ENCODE measurements at regions of chr7 and their contacts with region 1.

Region 1: DNA sequence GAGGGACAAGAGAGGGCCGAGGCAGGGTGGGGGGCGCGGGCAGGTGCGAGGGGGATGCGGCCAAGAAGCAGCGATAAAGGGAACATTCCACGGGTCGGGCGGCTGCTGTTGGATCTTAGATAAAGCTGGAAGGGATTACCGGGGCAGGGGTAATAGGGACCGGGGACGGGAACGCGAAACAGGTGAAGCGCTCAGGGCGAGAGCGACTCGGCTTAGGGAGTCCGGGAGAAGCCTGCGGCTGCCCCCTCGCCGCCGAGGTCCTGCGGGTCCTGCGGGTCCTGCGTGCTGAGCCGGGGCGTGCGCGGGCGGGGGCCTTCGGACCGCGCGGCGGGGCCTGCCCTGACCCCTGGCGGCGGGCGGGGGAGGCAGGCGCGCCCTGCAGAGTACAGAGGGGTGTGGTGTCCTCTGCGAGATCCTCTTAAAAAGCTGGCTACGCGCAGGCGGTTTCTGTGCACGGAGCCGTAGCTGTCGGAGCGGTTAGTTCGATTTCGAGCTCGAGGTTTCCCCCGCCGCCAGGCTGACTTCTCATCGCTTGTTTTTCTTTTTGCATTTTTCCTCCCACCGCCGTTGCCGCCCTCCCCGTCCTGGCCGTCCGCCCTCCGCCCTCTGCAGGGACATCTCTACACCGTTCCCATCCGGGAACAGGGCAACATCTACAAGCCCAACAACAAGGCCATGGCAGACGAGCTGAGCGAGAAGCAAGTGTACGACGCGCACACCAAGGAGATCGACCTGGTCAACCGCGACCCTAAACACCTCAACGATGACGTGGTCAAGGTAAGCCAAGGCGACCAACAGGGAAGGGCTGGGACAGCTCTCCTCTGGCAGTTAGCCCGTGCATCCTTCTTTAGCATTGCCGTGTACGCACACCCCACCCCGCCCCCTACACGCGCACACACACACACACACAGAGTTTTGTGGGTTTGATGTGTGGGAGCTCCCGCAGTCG is 1.4 kb downstream of the CAV1 start:
- DNase-seq: peak; percentile 74
- ATAC-seq: peak; percentile 91
- H3K4me3 Mint-ChIP-seq: peak overlapping the region; percentile 90
- H3K27ac Mint-ChIP-seq: peak overlapping the region; percentile 71
- H3K4me1 Mint-ChIP-seq: peaks cover 19% of the 10 kb centered on the region
- H3K27me3 Mint-ChIP-seq: peaks cover 38% of the 10 kb centered on the region
- CTCF ChIP-seq: peak; percentile 68

Region 2: DNA sequence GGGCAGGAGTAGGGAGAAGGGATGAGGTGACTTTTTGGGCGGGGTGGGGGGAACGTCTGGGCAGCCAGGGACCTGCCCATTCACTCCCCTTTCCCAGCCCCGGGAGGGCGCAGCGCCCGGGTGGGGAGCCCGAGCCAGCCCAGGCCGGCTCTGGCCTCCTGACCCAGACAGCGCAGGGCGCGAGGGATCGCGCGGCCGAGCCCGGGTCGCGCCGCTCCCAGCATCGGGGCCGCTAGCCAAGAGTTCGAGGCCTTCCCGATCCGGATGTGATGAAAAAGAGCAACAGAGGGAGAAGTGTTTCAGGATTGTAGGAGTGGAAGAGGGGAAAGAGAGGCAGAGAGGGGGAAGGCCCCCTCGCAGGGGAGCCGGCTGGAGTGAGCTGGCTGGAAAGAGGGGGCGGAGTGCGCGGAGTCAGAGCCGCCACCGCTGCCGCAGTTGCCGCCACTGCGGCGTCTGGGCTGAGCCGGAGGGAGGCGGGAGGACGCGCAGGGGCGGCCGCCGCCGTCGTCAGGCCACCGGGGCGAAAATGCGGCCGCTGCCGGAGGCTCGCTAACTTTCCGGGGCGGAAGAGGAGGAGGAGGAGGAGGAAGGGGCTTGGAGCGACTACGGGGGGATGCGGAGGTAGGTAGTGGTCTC is 1604.1 kb before region 1 on chr7 and contains the start of gene MDFIC:
- CTCF ChIA-PET with region 1: no interaction called
- POLR2A ChIA-PET with region 1: no interaction called
- intact Hi-C with region 1: loop called (anchors 10 kb)
- DNase-seq: peak; percentile 66
- ATAC-seq: peak; percentile 63
- H3K4me3 Mint-ChIP-seq: peak within 1 kb of the TSS; percentile 95
- H3K27ac Mint-ChIP-seq: peak within 1 kb of the TSS; percentile 97
- H3K4me1 Mint-ChIP-seq: peaks cover 70% of the 10 kb centered on the region
- H3K27me3 Mint-ChIP-seq: no peaks in the 10 kb centered on the region
- CTCF ChIP-seq: no peak
- total RNA-seq, gene MDFIC: 139 and 160 TPM in 2 replicates

Region 3: GRCh38 chr7:116173051-116174028 is 352.8 kb before region 1 on chr7:
- CTCF ChIA-PET with region 1: interaction called, 3 read pairs
- POLR2A ChIA-PET with region 1: no interaction called
- intact Hi-C with region 1: loop called (anchors 2 kb)
- DNase-seq: no peak
- ATAC-seq: peak; percentile 49
- H3K4me3 Mint-ChIP-seq: no peak overlapping the region
- H3K27ac Mint-ChIP-seq: no peak overlapping the region
- H3K4me1 Mint-ChIP-seq: peaks cover 12% of the 10 kb centered on the region
- H3K27me3 Mint-ChIP-seq: no peaks in the 10 kb centered on the region
- CTCF ChIP-seq: no peak

Region 4: DNA sequence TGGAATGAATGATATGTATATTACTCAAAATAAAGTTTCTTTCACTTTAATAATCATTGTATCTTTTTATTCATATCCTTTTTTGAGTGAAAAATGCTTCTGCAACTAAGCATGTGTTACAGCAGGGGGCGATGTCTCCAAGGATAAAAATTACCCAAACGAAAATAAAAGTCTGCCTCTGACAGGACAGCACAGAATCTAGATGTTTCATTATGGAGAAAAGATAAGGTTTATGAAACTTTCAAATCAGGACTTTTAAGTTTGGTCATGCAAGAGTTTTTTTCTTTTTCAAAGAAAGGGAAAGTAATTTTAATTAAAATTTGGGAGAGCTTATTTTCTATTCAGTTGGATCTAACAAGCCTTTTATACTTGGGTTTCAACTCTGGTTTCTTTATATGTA is 267.5 kb before region 1 on chr7:
- CTCF ChIA-PET with region 1: interaction called, 37 read pairs
- POLR2A ChIA-PET with region 1: no interaction called
- intact Hi-C with region 1: loop called (anchors 1 kb)
- DNase-seq: no peak
- ATAC-seq: peak; percentile 60
- H3K4me3 Mint-ChIP-seq: no peak overlapping the region
- H3K27ac Mint-ChIP-seq: no peak overlapping the region
- H3K4me1 Mint-ChIP-seq: peaks cover 12% of the 10 kb centered on the region
- H3K27me3 Mint-ChIP-seq: no peaks in the 10 kb centered on the region
- CTCF ChIP-seq: peak; percentile 63

Region 5: GRCh38 chr7:116340943-116341907 is 185.0 kb before region 1 on chr7:
- CTCF ChIA-PET with region 1: no interaction called
- POLR2A ChIA-PET with region 1: no interaction called
- intact Hi-C with region 1: no loop called
- DNase-seq: no peak
- ATAC-seq: no peak
- H3K4me3 Mint-ChIP-seq: no peak overlapping the region
- H3K27ac Mint-ChIP-seq: no peak overlapping the region
- H3K4me1 Mint-ChIP-seq: peaks cover 4% of the 10 kb centered on the region
- H3K27me3 Mint-ChIP-seq: peaks cover 2% of the 10 kb centered on the region
- CTCF ChIP-seq: no peak

Region 6: DNA sequence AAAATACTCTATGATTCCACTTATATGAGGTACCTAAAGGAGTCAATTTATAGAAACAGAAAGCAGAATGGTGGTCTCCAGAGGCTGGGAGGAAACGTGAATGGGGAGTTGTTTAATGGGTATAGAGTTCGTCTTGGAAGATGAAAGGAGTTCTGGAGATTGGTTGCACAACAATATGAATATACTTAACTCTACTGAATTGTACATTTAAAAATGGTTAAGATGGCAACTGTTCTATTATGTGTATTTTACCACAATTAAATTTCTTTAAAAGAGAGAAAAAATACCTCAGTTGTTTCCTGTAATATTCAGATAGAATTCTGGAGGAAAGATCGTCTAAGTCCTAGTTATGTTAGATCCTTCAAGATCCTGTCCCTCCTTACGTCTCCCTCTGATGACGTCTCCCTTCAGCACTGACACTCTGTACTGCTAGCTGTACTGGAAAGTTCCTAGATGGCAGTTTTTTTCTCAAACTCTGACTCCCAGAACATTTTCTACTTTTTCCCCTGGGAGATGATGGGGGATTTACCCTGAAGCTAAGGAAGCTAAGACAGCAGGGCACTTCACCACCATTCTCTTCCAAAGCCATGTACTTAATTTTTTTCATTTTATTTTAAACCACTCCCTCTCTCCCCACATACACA is 79.9 kb before region 1 on chr7:
- CTCF ChIA-PET with region 1: no interaction called
- POLR2A ChIA-PET with region 1: no interaction called
- intact Hi-C with region 1: loop called (anchors 5 kb)
- DNase-seq: no peak
- ATAC-seq: no peak
- H3K4me3 Mint-ChIP-seq: no peak overlapping the region
- H3K27ac Mint-ChIP-seq: no peak overlapping the region
- H3K4me1 Mint-ChIP-seq: no peaks in the 10 kb centered on the region
- H3K27me3 Mint-ChIP-seq: peaks cover 8% of the 10 kb centered on the region
- CTCF ChIP-seq: no peak

Region 7: GRCh38 chr7:116671681-116672595 is 145.8 kb after region 1 on chr7 and contains the start of gene MET:
- CTCF ChIA-PET with region 1: no interaction called
- POLR2A ChIA-PET with region 1: no interaction called
- intact Hi-C with region 1: loop called (anchors 5 kb)
- DNase-seq: peak; percentile 54
- ATAC-seq: peak; percentile 86
- H3K4me3 Mint-ChIP-seq: peak within 1 kb of the TSS; percentile 79
- H3K27ac Mint-ChIP-seq: no peak within 1 kb of the TSS
- H3K4me1 Mint-ChIP-seq: peaks cover 20% of the 10 kb centered on the region
- H3K27me3 Mint-ChIP-seq: peaks cover 64% of the 10 kb centered on the region
- CTCF ChIP-seq: no peak
- total RNA-seq, gene MET: 1.1 and 1.5 TPM in 2 replicates

Region 8: GRCh38 chr7:116809636-116810266 is 283.6 kb after region 1 on chr7:
- CTCF ChIA-PET with region 1: no interaction called
- POLR2A ChIA-PET with region 1: no interaction called
- intact Hi-C with region 1: loop called (anchors 2 kb)
- DNase-seq: no peak
- ATAC-seq: peak; percentile 50
- H3K4me3 Mint-ChIP-seq: no peak overlapping the region
- H3K27ac Mint-ChIP-seq: no peak overlapping the region
- H3K4me1 Mint-ChIP-seq: no peaks in the 10 kb centered on the region
- H3K27me3 Mint-ChIP-seq: peaks cover 9% of the 10 kb centered on the region
- CTCF ChIP-seq: peak; percentile 53

Measured in activated B cell treated with CpG ODN at 0.5 μM for 24 hours (primary cell).